ENCODE measurements at regions of chr6 and their contacts with region 1.

Region 1: GRCh38 chr6:33771146-33772081 is 17.5 kb downstream of the LEMD2 start:
- DNase-seq: peak; percentile 86
- ATAC-seq: peak; percentile 81
- H3K4me3 Mint-ChIP-seq: 0 out of 2 replicates have a peak overlapping the region, but pooled peaks have one; percentile 6
- H3K27ac Mint-ChIP-seq: peak overlapping the region; percentile 70
- H3K4me1 Mint-ChIP-seq: peaks cover 32% of the 10 kb centered on the region
- H3K27me3 Mint-ChIP-seq: no peaks in the 10 kb centered on the region
- CTCF ChIP-seq: peak; percentile 86

Region 2: GRCh38 chr6:33711140-33712129 is 60.0 kb before region 1 on chr6 and contains the start of gene UQCC2:
- CTCF ChIA-PET with region 1: interaction called, 31 read pairs
- POLR2A ChIA-PET with region 1: no interaction called
- DNase-seq: peak; percentile 96
- ATAC-seq: peak; percentile 96
- H3K4me3 Mint-ChIP-seq: peak within 1 kb of the TSS; percentile 82
- H3K27ac Mint-ChIP-seq: peak within 1 kb of the TSS; percentile 94
- H3K4me1 Mint-ChIP-seq: peaks cover 33% of the 10 kb centered on the region
- H3K27me3 Mint-ChIP-seq: no peaks in the 10 kb centered on the region; the same call in 1 of the 2 replicates
- CTCF ChIP-seq: no peak
- total RNA-seq, gene UQCC2: 65.8 to 105 TPM (median 95.3 TPM) in 3 replicates

Region 3: GRCh38 chr6:33751771-33752645 is 19.4 kb before region 1 on chr6:
- CTCF ChIA-PET with region 1: interaction called, 41 read pairs
- POLR2A ChIA-PET with region 1: no interaction called
- DNase-seq: no peak
- ATAC-seq: no peak; the same call in 1 of the 2 replicates
- H3K4me3 Mint-ChIP-seq: no peak overlapping the region
- H3K27ac Mint-ChIP-seq: no peak overlapping the region; the same call in 1 of the 2 replicates
- H3K4me1 Mint-ChIP-seq: peaks cover 18% of the 10 kb centered on the region
- H3K27me3 Mint-ChIP-seq: no peaks in the 10 kb centered on the region; the same call in 1 of the 2 replicates
- CTCF ChIP-seq: no peak

Region 4: GRCh38 chr6:33812669-33813068 is 41.3 kb after region 1 on chr6:
- CTCF ChIA-PET with region 1: interaction called, 39 read pairs
- POLR2A ChIA-PET with region 1: interaction called, 3 read pairs
- DNase-seq: peak; percentile 88
- ATAC-seq: peak; percentile 56
- H3K4me3 Mint-ChIP-seq: peak overlapping the region; percentile 21
- H3K27ac Mint-ChIP-seq: no peak overlapping the region
- H3K4me1 Mint-ChIP-seq: peaks cover 65% of the 10 kb centered on the region
- H3K27me3 Mint-ChIP-seq: peaks cover 12% of the 10 kb centered on the region
- CTCF ChIP-seq: no peak

Region 5: GRCh38 chr6:33851959-33852358 is 80.5 kb after region 1 on chr6:
- CTCF ChIA-PET with region 1: interaction called, 48 read pairs
- POLR2A ChIA-PET with region 1: no interaction called
- DNase-seq: peak; percentile 78
- ATAC-seq: peak; percentile 88
- H3K4me3 Mint-ChIP-seq: no peak overlapping the region
- H3K27ac Mint-ChIP-seq: no peak overlapping the region
- H3K4me1 Mint-ChIP-seq: peaks cover 24% of the 10 kb centered on the region
- H3K27me3 Mint-ChIP-seq: peaks cover 3% of the 10 kb centered on the region; the same call in 1 of the 2 replicates
- CTCF ChIP-seq: 0 out of 2 replicates have a peak, but pooled peaks have one; percentile 20

Region 6: GRCh38 chr6:33967966-33968724 is 196.7 kb after region 1 on chr6:
- CTCF ChIA-PET with region 1: interaction called, 11 read pairs
- POLR2A ChIA-PET with region 1: no interaction called
- DNase-seq: peak; percentile 62
- ATAC-seq: peak; percentile 99
- H3K4me3 Mint-ChIP-seq: no peak overlapping the region
- H3K27ac Mint-ChIP-seq: no peak overlapping the region
- H3K4me1 Mint-ChIP-seq: no peaks in the 10 kb centered on the region
- H3K27me3 Mint-ChIP-seq: peaks cover 38% of the 10 kb centered on the region
- CTCF ChIP-seq: no peak

Region 7: DNA sequence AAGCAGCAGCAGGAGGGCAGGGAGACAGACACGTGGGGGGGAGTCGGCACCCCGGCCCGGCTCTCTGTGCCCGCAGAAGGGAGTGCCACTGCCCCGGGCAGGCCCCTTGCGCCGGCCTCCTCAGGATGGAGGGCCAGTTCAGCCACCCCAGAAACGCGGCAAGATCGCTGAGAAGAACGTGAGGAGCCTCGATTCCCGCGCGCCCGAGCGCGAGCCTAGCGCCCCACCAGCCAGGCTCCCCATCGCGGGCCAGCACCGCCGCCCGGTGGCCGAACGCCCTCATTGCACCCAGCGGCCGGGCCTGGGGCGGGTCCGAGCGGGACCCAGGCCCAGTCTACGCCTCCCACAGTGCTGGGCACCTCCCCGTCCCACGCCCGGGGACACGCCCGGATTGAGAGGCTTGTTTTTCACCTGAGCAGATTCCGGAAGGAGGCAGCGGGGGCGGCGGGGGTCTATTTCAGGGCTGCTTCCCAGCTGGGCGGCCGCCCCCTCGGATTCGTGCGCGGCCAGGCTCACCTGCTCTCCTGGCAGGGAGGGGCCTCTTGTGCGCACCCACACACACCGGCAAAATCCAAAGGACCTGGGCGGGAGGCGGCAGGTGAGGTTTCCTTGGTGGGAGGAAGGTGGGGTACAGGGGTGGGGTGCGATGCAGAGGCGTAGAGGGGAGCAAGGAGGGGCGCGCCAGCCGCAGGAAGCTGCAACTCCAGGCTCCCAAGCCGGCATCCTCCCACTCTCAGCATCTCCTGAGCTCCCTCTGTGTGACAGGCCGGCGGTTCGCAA is 383.4 kb after region 1 on chr6:
- CTCF ChIA-PET with region 1: interaction called, 43 read pairs
- POLR2A ChIA-PET with region 1: interaction called, 3 read pairs
- DNase-seq: peak; percentile 87
- ATAC-seq: peak; percentile 78
- H3K4me3 Mint-ChIP-seq: peak overlapping the region; percentile 64
- H3K27ac Mint-ChIP-seq: no peak overlapping the region
- H3K4me1 Mint-ChIP-seq: peaks cover 40% of the 10 kb centered on the region
- H3K27me3 Mint-ChIP-seq: peaks cover 64% of the 10 kb centered on the region
- CTCF ChIP-seq: peak; percentile 97